SK-N-SH (cell line): ENCODE measurements at regions of chr19 and their contacts with region 1.

Region 1: DNA sequence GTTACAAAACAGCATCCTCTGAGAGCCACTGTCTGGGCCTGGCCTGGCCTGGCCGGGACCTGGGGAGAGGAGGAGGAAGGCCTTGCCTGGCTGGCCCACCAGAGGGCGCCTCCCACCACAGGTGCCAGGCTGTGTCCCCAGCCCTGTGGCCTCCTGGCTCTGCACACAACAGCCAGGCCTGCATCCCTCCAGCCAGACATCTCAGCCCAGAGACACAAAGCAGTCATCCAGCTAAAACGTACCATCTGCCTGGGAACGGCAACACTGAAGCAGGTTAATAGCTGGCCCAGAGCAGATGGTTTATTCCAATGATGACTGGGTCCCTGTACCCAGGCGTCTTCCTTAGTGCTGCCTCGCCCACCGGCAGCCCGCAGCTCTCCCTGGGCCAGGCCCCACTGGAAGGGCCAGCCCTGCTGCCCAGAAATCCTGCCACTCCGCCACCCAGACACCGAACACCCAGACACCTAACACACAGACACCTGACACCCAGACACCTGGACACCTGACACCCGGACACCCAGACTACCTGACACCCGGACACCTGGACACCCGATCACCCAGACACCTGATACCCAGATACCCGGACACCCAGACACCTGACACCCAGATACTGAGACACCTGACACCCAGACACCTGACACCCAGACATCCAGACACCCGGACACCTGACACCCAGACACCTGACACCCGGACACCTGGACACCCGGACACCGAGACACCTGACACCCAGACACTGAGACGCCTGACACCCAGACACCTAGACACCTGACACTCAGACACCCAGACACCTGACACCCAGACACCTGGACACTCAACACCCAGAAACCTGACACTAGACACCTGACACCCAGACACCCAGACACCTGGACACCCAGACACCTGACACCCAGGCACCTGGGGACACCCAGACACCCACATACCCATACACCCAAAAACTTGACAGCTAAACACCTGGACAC is 20.1 kb downstream of the C19orf12 start:
- DNase-seq: peak; percentile 92
- H3K4me3 ChIP-seq: no peak overlapping the region; a peak in 1 of 4 replicates
- H3K27ac ChIP-seq: peak overlapping the region in 1 of 2 experiments; percentile 12; a peak in 1 of 4 replicates
- H3K4me1 ChIP-seq: peaks cover 0 to 7% of the 10 kb centered on the region in 2 experiments; a peak in 1 of 4 replicates
- H3K27me3 ChIP-seq: no peaks in the 10 kb centered on the region
- CTCF ChIP-seq: peak; percentile 82
- EP300 ChIP-seq: peak in 1 of 2 experiments; percentile 7; a peak in 1 of 4 replicates
- RAD21 ChIP-seq: peak; percentile 85

Region 2: GRCh38 chr19:29610563-29611271 is 84.2 kb before region 1 on chr19:
- CTCF ChIA-PET with region 1: interaction called, 16 read pairs
- POLR2A ChIA-PET with region 1: no interaction called
- DNase-seq: peak; percentile 90
- H3K4me3 ChIP-seq: no peak overlapping the region
- H3K27ac ChIP-seq: no peak overlapping the region
- H3K4me1 ChIP-seq: peaks cover 0 to 5% of the 10 kb centered on the region in 2 experiments; a peak in 2 of 4 replicates
- H3K27me3 ChIP-seq: no peaks in the 10 kb centered on the region
- CTCF ChIP-seq: peak; percentile 87
- EP300 ChIP-seq: no peak
- RAD21 ChIP-seq: peak; percentile 84

Region 3: GRCh38 chr19:29665215-29665825 is 29.6 kb before region 1 on chr19 and contains the start of gene PLEKHF1:
- CTCF ChIA-PET with region 1: interaction called, 15 read pairs
- POLR2A ChIA-PET with region 1: interaction called, 3 read pairs
- DNase-seq: peak; percentile 98
- H3K4me3 ChIP-seq: peak within 1 kb of the TSS; percentile 74 to 82
- H3K27ac ChIP-seq: peak within 1 kb of the TSS in 1 of 2 experiments; percentile 26; a peak in 1 of 4 replicates
- H3K4me1 ChIP-seq: peaks cover 14 to 27% of the 10 kb centered on the region in 2 experiments; a peak in 3 of 4 replicates
- H3K27me3 ChIP-seq: no peaks in the 10 kb centered on the region
- CTCF ChIP-seq: no peak
- EP300 ChIP-seq: no peak
- RAD21 ChIP-seq: peak; percentile 7; the same call in 1 of the 2 replicates
- polyA plus RNA-seq, gene PLEKHF1: 3.9 TPM in 2 replicates

Region 4: DNA sequence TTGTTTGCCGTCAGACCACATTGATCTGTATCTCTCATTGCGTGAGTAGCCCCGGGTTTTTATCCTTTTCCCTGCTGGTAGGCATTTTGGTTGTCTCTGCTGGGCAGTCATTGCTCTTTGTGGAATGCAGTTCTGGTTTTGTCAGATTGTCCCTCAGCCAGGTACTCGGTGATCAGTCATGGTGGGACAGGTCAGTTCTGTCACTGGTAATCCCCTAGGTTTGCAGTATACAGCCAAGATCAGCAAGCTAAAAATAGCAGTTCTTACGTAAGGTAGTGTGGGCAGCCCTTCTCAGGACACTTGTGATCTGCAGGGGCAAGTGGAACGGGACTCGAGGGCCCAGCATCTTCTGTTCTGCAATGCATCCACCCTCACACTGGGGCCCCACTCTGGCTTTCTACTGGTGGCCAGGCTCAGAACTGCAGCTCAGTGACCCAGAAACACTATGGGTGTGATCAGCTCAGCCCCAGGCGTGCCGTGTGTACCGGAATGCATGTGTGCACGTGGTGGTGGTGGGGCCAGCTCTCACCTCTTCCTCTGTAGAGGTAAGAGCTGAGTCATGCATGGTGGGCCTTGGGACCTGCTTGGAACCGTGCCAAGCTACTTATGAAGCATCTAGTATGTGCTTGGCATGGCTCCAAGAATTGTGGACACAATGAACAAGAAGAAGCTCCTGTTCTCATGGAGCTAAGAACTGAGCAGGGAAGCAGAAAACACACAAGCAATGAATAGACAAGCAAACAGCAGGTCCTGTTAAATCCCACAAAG is 23.4 kb before region 1 on chr19:
- CTCF ChIA-PET with region 1: interaction called, 15 read pairs
- POLR2A ChIA-PET with region 1: no interaction called
- DNase-seq: no peak
- H3K4me3 ChIP-seq: no peak overlapping the region
- H3K27ac ChIP-seq: no peak overlapping the region
- H3K4me1 ChIP-seq: peaks cover 5 to 11% of the 10 kb centered on the region in 2 experiments; a peak in 2 of 4 replicates
- H3K27me3 ChIP-seq: no peaks in the 10 kb centered on the region
- CTCF ChIP-seq: no peak; the same call in 1 of the 2 replicates
- EP300 ChIP-seq: no peak
- RAD21 ChIP-seq: no peak

Region 5: GRCh38 chr19:29678161-29679106 is 16.5 kb before region 1 on chr19:
- CTCF ChIA-PET with region 1: interaction called, 11 read pairs
- POLR2A ChIA-PET with region 1: no interaction called
- DNase-seq: peak; percentile 58
- H3K4me3 ChIP-seq: no peak overlapping the region
- H3K27ac ChIP-seq: no peak overlapping the region; a peak in 1 of 4 replicates
- H3K4me1 ChIP-seq: peaks cover 0 to 8% of the 10 kb centered on the region in 2 experiments; a peak in 1 of 4 replicates
- H3K27me3 ChIP-seq: no peaks in the 10 kb centered on the region
- CTCF ChIP-seq: no peak
- EP300 ChIP-seq: peak in 1 of 2 experiments; percentile 11; a peak in 1 of 4 replicates
- RAD21 ChIP-seq: no peak

Region 6: DNA sequence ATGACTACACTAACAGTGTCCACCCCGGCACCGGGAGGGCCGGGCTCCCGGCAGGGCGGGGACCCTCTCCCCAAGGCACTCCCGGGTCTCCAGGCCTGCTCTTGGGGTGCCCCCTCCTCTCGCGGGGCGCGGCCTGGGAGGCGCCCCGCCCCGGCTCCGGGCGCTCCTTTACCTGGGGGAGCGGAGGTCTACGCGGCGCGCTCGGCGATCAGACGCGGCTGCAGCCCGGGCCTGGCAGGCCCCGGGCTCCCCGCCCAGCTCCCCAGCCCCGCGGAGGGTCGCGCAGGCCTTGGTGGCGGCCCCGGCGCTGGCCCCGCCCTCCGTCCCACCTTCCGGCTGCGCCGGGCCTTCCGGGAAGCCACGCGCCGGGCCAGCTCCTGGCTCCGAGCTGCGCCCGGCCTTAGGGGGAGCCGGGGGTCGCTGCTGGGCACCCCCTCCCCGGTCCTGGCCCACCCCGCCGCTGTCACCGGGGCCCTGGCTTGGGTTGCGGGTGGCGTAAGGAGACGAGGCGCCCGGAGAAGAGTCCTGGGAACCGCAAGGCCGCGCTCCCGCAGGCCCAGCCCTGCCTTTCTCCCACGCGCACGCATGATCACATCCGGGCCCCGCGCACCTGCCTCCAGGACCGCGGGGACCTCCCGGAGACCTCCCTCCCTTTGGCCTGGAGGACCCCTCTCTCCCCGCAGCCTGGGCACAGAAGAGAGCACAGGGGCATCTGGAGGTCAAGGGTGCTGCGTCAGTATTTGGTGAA is 20.2 kb after region 1 on chr19 and contains the start of gene C19orf12:
- CTCF ChIA-PET with region 1: interaction called, 104 read pairs
- POLR2A ChIA-PET with region 1: interaction called, 15 read pairs
- DNase-seq: peak; percentile 93
- H3K4me3 ChIP-seq: peak within 1 kb of the TSS; percentile 82 to 84
- H3K27ac ChIP-seq: peak within 1 kb of the TSS; percentile 74 to 83
- H3K4me1 ChIP-seq: peaks cover 7 to 20% of the 10 kb centered on the region in 2 experiments; a peak in 2 of 4 replicates
- H3K27me3 ChIP-seq: no peaks in the 10 kb centered on the region
- CTCF ChIP-seq: no peak
- EP300 ChIP-seq: no peak
- RAD21 ChIP-seq: no peak
- polyA plus RNA-seq, gene C19orf12: 26.4 and 30.5 TPM in 2 replicates

Region 7: DNA sequence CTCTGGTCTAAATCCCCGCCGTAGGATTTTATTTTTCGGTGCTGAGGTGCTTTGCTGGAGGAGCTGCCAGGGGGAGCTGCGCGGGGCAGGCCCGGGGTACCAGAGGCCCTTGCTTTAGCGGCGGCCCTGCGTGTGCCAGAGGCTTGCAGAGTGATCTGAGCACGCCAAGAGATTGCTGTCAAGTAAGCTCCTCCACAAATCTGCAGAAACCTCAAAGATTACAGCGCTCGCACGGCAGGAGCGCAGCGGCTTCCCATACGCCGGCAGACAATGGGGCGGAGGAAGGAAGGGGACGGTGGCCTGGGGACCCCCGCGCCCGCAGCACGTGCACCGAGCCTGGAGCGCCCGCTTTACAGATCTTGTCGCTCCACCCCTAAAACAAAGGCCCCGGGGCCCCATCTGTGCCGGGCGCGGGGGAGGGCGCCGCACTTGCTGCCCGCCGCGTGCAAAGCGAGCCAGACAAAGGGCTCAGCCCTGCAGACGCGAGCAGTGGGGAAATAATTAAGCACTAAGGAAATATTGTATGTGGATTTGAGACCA is 29.2 kb after region 1 on chr19:
- CTCF ChIA-PET with region 1: interaction called, 12 read pairs
- POLR2A ChIA-PET with region 1: no interaction called
- DNase-seq: no peak
- H3K4me3 ChIP-seq: no peak overlapping the region
- H3K27ac ChIP-seq: no peak overlapping the region
- H3K4me1 ChIP-seq: no peaks in the 10 kb centered on the region; a peak in 1 of 4 replicates
- H3K27me3 ChIP-seq: no peaks in the 10 kb centered on the region; the same call in 1 of the 2 replicates
- CTCF ChIP-seq: no peak
- EP300 ChIP-seq: no peak
- RAD21 ChIP-seq: no peak